Left ventricle myocardium inferior (tissue), 1 donor: ENCODE measurements at regions of chr9 and their contacts with region 1.

Region 1: GRCh38 chr9:135410831-135411473 is 68.6 kb upstream of the PPP1R26 start:
- DNase-seq: no peak
- H3K4me3 ChIP-seq: no peak overlapping the region
- H3K27ac ChIP-seq: no peak overlapping the region
- H3K4me1 ChIP-seq: peaks cover 5% of the 10 kb centered on the region
- H3K27me3 ChIP-seq: peaks cover 98% of the 10 kb centered on the region
- CTCF ChIP-seq: no peak

Region 2: GRCh38 chr9:135085830-135086546 is 325.0 kb before region 1 on chr9:
- intact Hi-C with region 1: loop called (anchors 5 kb)
- DNase-seq: peak; percentile 75
- H3K4me3 ChIP-seq: peak overlapping the region; percentile 67
- H3K27ac ChIP-seq: peak overlapping the region; percentile 68
- H3K4me1 ChIP-seq: peaks cover 41% of the 10 kb centered on the region
- H3K27me3 ChIP-seq: peaks cover 75% of the 10 kb centered on the region
- CTCF ChIP-seq: peak; percentile 98

Region 3: GRCh38 chr9:135536216-135536615 is 125.3 kb after region 1 on chr9:
- intact Hi-C with region 1: no loop called
- DNase-seq: no peak
- H3K4me3 ChIP-seq: no peak overlapping the region
- H3K27ac ChIP-seq: no peak overlapping the region
- H3K4me1 ChIP-seq: no peaks in the 10 kb centered on the region
- H3K27me3 ChIP-seq: peaks cover 39% of the 10 kb centered on the region
- CTCF ChIP-seq: no peak